RWPE1 (cell line): ENCODE measurements at regions of chr20 and their contacts with region 1.

Region 1: DNA sequence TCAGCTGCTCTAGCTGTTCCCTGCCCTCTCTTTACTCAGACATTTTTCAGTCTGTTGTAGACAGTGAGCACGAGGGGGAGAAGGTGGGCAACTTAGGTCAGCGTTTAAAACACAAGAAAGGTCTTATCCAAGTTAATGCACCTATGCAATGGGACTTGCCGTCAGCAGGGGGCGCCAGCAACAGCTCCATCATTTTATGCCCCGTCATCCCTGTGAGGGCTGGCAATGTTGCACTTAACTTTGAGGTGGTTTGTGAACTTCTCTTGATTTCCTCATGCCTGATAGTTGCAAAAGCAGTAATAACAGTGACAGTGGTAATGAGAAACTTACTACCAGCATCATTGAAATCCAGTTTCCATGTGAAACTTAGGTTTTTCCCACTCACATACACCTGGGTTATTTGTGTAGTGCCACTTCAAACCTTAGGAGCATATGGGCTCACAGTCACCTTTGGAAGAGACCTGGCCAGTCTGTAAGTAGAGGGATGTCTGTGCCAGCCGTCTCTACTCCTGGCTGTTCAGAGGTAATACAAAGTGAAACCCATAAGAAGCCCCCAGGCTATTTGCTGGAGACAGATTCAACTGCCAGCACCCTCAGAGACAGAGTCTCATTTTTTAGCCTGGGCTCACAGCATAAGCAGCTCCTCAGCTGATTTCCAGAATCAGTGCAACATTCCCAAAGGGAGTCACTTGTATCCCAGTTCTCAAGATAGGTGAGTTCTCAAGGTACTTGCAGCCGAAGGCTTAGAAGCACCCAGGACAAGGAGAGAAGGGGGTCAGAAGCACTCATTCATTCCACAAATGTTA is 44.8 kb upstream of the ID1 start:
- DNase-seq: peak; percentile 76
- H3K27ac ChIP-seq: peak overlapping the region; percentile 93
- CTCF ChIP-seq: peak; percentile 99

Region 2: DNA sequence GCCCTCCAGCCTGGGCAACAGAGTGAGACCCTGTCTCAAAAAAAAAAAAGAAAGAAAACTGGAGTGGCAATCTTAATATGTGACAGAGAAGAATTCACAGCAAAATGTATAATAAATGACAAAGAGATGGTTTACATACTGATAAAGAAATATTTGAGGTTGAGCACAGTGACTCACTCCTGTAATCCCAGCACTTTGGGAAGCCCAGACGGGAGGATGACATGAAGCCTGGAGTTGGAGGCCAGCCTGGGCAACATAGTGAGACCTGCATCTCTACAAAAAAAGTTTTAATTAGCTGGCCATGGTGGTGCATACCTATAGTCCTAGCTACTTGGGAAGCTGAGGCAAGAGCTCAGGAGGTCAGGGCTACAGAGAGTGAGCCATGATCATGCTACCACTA is 204.3 kb before region 1 on chr20:
- CTCF ChIA-PET with region 1: no interaction called
- POLR2A ChIA-PET with region 1: no interaction called
- DNase-seq: no peak
- H3K27ac ChIP-seq: no peak overlapping the region
- CTCF ChIP-seq: no peak

Region 3: GRCh38 chr20:31547017-31547675 is 13.2 kb before region 1 on chr20:
- CTCF ChIA-PET with region 1: interaction called, 15 read pairs
- POLR2A ChIA-PET with region 1: interaction called, 5 read pairs
- DNase-seq: peak; percentile 92
- H3K27ac ChIP-seq: peak overlapping the region; percentile 81
- CTCF ChIP-seq: no peak

Region 4: GRCh38 chr20:31572701-31573554 is 12.6 kb after region 1 on chr20:
- CTCF ChIA-PET with region 1: interaction called, 32 read pairs
- POLR2A ChIA-PET with region 1: interaction called, 6 read pairs
- DNase-seq: peak; percentile 99
- H3K27ac ChIP-seq: peak overlapping the region; percentile 93
- CTCF ChIP-seq: no peak

Region 5: GRCh38 chr20:31578448-31579138 is 18.3 kb after region 1 on chr20:
- CTCF ChIA-PET with region 1: interaction called, 13 read pairs
- POLR2A ChIA-PET with region 1: interaction called, 6 read pairs
- DNase-seq: no peak
- H3K27ac ChIP-seq: peak overlapping the region; percentile 6; the same call in 1 of the 2 replicates
- CTCF ChIP-seq: no peak

Region 6: DNA sequence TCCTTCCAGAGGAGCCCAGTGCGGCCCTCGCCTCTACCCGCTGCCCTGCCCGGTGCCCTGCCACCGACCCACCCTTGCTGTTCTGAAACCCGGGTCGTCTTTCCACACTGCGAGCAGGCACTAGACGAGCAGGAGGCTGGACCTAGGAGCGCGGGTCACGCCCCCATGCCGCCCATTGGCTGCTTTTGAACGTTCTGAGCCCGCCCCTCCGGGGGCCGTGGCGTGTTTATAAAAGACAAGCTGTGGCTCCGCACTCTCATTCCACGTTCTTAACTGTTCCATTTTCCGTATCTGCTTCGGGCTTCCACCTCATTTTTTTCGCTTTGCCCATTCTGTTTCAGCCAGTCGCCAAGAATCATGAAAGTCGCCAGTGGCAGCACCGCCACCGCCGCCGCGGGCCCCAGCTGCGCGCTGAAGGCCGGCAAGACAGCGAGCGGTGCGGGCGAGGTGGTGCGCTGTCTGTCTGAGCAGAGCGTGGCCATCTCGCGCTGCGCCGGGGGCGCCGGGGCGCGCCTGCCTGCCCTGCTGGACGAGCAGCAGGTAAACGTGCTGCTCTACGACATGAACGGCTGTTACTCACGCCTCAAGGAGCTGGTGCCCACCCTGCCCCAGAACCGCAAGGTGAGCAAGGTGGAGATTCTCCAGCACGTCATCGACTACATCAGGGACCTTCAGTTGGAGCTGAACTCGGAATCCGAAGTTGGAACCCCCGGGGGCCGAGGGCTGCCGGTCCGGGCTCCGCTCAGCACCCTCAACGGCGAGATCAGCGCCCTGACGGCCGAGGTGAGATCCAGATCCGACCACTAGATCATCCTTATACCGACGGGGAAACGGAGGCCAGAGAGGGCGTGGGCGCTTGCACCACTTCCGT is 45.0 kb after region 1 on chr20 and contains the start of gene ID1:
- CTCF ChIA-PET with region 1: interaction called, 656 read pairs
- POLR2A ChIA-PET with region 1: interaction called, 46 read pairs
- DNase-seq: peak; percentile 99
- H3K27ac ChIP-seq: peak within 1 kb of the TSS; percentile 86
- CTCF ChIP-seq: no peak

Region 7: GRCh38 chr20:31674895-31675827 is 114.9 kb after region 1 on chr20:
- CTCF ChIA-PET with region 1: no interaction called
- POLR2A ChIA-PET with region 1: no interaction called
- DNase-seq: peak; percentile 84
- H3K27ac ChIP-seq: peak overlapping the region; percentile 77
- CTCF ChIP-seq: no peak